Mammary epithelial cell (primary cell): ENCODE measurements at regions of chr5 and their contacts with region 1.

Region 1: GRCh38 chr5:135887351-135887864 is 8.2 kb downstream of the IL9 start:
- DNase-seq: peak; percentile 64
- H3K4me3 ChIP-seq: no peak overlapping the region
- H3K27ac ChIP-seq: no peak overlapping the region
- H3K4me1 ChIP-seq: peaks cover 3% of the 10 kb centered on the region
- H3K27me3 ChIP-seq: no peaks in the 10 kb centered on the region
- CTCF ChIP-seq: peak; percentile 81 to 83

Region 2: DNA sequence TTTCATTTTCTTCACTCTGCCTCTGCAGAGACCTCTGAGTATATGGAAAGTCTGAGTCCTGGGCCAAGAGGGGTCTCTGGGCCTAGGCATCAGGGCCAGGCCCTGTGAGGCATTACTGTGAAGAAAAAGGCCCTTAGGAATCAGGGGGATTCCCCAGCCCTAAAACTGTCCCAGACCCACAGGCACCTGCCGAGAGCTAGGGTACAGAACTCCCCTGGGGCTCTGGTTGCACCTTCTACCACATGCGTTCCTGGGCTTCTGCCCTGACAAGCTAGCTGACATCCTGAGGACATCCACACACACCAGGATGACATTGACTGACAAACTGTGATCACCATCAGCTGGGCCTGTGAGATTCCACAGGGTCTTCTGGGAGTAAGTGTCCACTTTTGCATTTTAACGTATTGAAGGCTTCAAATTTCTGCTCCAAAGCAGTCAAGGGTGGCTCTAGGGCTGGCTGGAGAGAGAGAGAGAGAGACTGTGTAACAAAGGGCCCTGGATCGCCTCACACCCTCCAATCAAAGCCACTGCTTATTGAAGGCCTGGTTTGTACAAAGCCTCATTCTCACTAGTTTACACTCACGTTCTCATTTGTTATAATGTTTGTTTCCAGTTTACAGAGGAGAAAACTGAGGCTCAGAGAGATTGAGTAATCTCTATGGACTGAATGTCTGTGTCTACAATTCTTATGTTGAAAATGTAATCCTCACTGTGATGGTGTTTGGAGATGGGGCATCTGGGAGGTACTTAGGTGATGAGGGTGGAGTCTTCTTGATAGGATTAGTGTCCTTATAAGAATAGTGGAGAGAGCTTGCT is 186.5 kb after region 1 on chr5:
- CTCF ChIA-PET with region 1: no interaction called
- dilution Hi-C with region 1: no loop called
- in situ Hi-C with region 1: loop called (anchors 5 to 10 kb)
- intact Hi-C with region 1: no loop called
- DNase-seq: no peak
- H3K4me3 ChIP-seq: no peak overlapping the region
- H3K27ac ChIP-seq: no peak overlapping the region
- H3K4me1 ChIP-seq: peaks cover 7% of the 10 kb centered on the region
- H3K27me3 ChIP-seq: no peaks in the 10 kb centered on the region
- CTCF ChIP-seq: no peak

Region 3: DNA sequence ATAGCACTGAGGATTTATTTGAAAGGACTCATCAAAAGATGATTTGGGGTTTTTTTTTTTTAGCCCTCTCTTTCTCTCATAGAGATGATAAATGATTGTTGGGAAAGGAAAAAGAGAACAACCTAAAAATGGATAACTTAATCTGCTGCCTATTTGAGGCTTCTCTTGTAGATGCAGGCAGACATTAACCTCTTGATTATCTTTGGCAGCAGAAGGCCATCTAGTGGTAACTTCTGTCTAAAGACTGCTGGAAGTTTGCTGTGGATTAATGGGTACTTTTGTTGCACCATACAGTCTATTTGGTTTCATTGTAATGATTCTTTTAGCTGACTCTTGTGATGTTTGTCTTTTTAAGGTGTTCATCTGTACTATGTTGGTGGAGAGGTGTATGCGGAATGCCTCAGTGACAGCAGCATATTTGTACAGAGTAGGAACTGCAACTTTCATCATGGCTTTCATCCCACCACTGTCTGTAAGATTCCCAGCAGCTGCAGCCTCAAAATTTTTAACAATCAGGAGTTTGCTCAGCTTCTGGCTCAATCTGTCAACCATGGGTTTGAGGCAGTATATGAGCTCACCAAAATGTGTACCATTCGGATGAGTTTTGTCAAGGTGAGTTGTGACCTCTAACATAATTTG is 286.7 kb after region 1 on chr5:
- CTCF ChIA-PET with region 1: no interaction called
- dilution Hi-C with region 1: no loop called
- in situ Hi-C with region 1: no loop called
- intact Hi-C with region 1: loop called (anchors 2 kb)
- DNase-seq: peak; percentile 50
- H3K4me3 ChIP-seq: no peak overlapping the region
- H3K27ac ChIP-seq: no peak overlapping the region
- H3K4me1 ChIP-seq: no peaks in the 10 kb centered on the region
- H3K27me3 ChIP-seq: no peaks in the 10 kb centered on the region
- CTCF ChIP-seq: peak; percentile 71 to 76

Region 4: GRCh38 chr5:136424835-136425584 is 537.6 kb after region 1 on chr5:
- CTCF ChIA-PET with region 1: no interaction called
- dilution Hi-C with region 1: no loop called
- in situ Hi-C with region 1: no loop called
- intact Hi-C with region 1: loop called (anchors 1 kb)
- DNase-seq: peak; percentile 31
- H3K4me3 ChIP-seq: no peak overlapping the region
- H3K27ac ChIP-seq: no peak overlapping the region
- H3K4me1 ChIP-seq: no peaks in the 10 kb centered on the region
- H3K27me3 ChIP-seq: no peaks in the 10 kb centered on the region
- CTCF ChIP-seq: peak; percentile 90 to 93